ENCODE measurements at regions of chr7 and their contacts with region 1.

Region 1: DNA sequence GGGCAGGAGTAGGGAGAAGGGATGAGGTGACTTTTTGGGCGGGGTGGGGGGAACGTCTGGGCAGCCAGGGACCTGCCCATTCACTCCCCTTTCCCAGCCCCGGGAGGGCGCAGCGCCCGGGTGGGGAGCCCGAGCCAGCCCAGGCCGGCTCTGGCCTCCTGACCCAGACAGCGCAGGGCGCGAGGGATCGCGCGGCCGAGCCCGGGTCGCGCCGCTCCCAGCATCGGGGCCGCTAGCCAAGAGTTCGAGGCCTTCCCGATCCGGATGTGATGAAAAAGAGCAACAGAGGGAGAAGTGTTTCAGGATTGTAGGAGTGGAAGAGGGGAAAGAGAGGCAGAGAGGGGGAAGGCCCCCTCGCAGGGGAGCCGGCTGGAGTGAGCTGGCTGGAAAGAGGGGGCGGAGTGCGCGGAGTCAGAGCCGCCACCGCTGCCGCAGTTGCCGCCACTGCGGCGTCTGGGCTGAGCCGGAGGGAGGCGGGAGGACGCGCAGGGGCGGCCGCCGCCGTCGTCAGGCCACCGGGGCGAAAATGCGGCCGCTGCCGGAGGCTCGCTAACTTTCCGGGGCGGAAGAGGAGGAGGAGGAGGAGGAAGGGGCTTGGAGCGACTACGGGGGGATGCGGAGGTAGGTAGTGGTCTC is at the start of gene MDFIC:
- DNase-seq: peak; percentile 64
- H3K4me3 ChIP-seq: peak within 1 kb of the TSS; percentile 90
- H3K27ac ChIP-seq: peak within 1 kb of the TSS; percentile 93
- H3K4me1 ChIP-seq: peaks cover 42% of the 10 kb centered on the region
- H3K27me3 ChIP-seq: no peaks in the 10 kb centered on the region
- CTCF ChIP-seq: peak; percentile 31
- total RNA-seq, gene MDFIC: 26.5 TPM

Region 2: GRCh38 chr7:114979388-114979787 is 57.3 kb after region 1 on chr7:
- intact Hi-C with region 1: loop called (anchors 10 kb)
- DNase-seq: peak; percentile 37
- H3K4me3 ChIP-seq: peak overlapping the region; percentile 57
- H3K27ac ChIP-seq: peak overlapping the region; percentile 78
- H3K4me1 ChIP-seq: peaks cover 69% of the 10 kb centered on the region
- H3K27me3 ChIP-seq: no peaks in the 10 kb centered on the region
- CTCF ChIP-seq: no peak

Region 3: DNA sequence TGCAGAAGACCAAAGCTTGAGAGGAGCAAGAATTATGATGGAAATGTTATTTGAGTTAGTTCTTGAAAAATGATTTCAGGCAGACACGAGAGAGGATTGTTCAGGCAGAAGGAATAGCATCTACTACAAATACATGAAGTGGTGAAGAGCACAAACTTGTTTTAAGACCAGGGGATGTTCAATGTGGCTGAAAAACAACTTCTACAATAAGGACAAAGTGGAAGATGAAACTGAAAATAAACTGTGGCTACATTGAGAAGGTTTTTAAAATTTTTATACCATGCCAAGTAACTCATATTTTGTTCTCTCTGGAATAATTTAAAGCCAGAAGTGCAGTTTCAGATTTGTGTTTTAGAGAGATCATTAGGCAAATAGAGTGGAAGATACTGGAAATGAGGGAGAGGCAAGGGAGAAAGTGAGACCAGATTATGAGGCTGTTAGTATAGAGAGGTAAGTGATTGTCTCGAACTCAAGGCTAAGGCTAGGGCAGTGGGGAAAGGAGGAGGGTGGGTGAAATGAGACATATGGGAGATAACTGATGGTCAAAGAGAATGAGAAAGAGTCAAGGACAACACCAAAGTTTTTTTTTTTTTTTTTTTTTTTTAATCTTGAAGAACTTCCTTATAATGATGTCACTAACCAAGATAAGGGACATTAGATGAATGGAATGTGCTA is 115.1 kb after region 1 on chr7:
- intact Hi-C with region 1: no loop called
- DNase-seq: no peak
- H3K4me3 ChIP-seq: no peak overlapping the region
- H3K27ac ChIP-seq: no peak overlapping the region
- H3K4me1 ChIP-seq: no peaks in the 10 kb centered on the region
- H3K27me3 ChIP-seq: no peaks in the 10 kb centered on the region
- CTCF ChIP-seq: no peak

Measured in left ventricle myocardium inferior (tissue), 1 donor.